Activated B cell treated with CpG ODN at 0.5 μM for 24 hours (primary cell): ENCODE measurements at regions of chr11 and their contacts with region 1.

Region 1: GRCh38 chr11:58586998-58587397 is 8.1 kb downstream of the ZFP91 start:
- DNase-seq: no peak
- ATAC-seq: peak; percentile 34
- H3K4me3 Mint-ChIP-seq: peak overlapping the region; percentile 12
- H3K27ac Mint-ChIP-seq: peak overlapping the region; percentile 38
- H3K4me1 Mint-ChIP-seq: peaks cover 49% of the 10 kb centered on the region
- H3K27me3 Mint-ChIP-seq: no peaks in the 10 kb centered on the region
- CTCF ChIP-seq: no peak

Region 2: GRCh38 chr11:58573451-58574104 is 13.4 kb before region 1 on chr11:
- CTCF ChIA-PET with region 1: interaction called, 19 read pairs
- POLR2A ChIA-PET with region 1: interaction called, 11 read pairs
- intact Hi-C with region 1: no loop called
- DNase-seq: no peak
- ATAC-seq: peak; percentile 35
- H3K4me3 Mint-ChIP-seq: peak overlapping the region; percentile 96
- H3K27ac Mint-ChIP-seq: peak overlapping the region; percentile 100
- H3K4me1 Mint-ChIP-seq: peaks cover 67% of the 10 kb centered on the region
- H3K27me3 Mint-ChIP-seq: no peaks in the 10 kb centered on the region
- CTCF ChIP-seq: no peak

Region 3: DNA sequence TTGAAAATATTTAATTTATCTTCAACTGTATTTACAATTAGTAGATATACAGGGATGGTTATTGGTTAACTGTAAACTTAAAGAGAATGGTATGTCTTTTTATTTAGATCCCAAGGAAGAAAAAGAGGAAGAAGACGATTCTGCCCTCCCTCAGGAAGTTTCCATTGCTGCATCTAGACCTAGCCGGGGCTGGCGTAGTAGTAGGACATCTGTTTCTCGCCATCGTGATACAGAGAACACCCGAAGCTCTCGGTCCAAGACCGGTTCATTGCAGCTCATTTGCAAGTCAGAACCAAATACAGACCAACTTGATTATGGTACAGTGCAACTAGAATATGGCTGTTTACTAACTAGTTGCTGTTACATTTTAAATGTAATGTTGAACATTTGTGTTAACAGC is 22.7 kb after region 1 on chr11:
- CTCF ChIA-PET with region 1: no interaction called
- POLR2A ChIA-PET with region 1: no interaction called
- intact Hi-C with region 1: loop called (anchors 2 kb)
- DNase-seq: no peak
- ATAC-seq: no peak
- H3K4me3 Mint-ChIP-seq: no peak overlapping the region
- H3K27ac Mint-ChIP-seq: peak overlapping the region; percentile 53
- H3K4me1 Mint-ChIP-seq: peaks cover 40% of the 10 kb centered on the region
- H3K27me3 Mint-ChIP-seq: no peaks in the 10 kb centered on the region
- CTCF ChIP-seq: no peak